Activated naive CD4-positive, alpha-beta T cell treated with anti-CD3 and anti-CD28 coated beads for 36 hours (primary cell): ENCODE measurements at regions of chr15 and their contacts with region 1.

Region 1: DNA sequence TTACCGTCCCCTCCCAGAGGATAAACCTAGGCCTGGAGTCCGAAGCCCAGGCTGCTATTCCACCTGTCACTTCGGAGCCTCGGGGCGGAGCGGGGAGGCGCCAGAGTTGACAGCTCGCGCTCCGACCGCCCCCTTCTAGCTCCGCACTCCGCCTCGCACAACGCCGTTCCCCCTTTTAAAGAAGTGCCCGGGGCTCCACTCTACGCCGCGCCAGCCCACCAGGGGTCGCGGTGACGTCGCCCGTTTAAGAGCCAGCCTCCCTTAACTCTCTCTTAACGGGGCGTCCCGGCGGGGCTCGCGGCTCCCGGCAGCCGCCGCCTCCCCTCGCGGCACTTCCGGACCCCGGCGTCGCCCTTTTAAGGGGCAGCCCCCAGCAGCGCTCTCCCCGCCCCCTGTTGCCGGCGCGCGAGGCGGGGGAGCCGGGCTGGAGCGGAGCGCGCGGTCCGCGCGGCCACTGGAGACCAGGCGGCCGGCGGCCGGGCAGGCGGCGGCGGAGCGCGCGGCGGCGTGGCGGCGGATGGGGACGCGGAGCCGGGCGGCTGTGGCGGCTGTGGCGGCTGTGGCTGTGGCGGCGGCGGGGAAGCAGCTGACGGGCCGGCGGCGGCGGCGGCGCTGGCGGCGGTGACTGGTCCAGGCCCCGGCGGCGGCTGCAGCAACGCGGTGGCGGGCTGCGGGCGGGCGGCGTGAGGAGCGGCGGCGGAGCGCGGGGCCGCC is at the start of gene INAFM2:
- DNase-seq: peak; percentile 77
- H3K4me3 Mint-ChIP-seq: peak within 1 kb of the TSS; percentile 73
- H3K27ac Mint-ChIP-seq: no peak within 1 kb of the TSS
- H3K4me1 Mint-ChIP-seq: peaks cover 22% of the 10 kb centered on the region
- H3K27me3 Mint-ChIP-seq: no peaks in the 10 kb centered on the region
- total RNA-seq, gene INAFM2: 4.9 to 6.5 TPM

Region 2: GRCh38 chr15:39934397-39935071 is 388.9 kb before region 1 on chr15:
- CTCF ChIA-PET with region 1: no interaction called
- intact Hi-C with region 1: loop called (anchors 5 kb)
- DNase-seq: peak; percentile 8
- H3K4me3 Mint-ChIP-seq: peak overlapping the region; percentile 89
- H3K27ac Mint-ChIP-seq: peak overlapping the region; percentile 52
- H3K4me1 Mint-ChIP-seq: peaks cover 27% of the 10 kb centered on the region
- H3K27me3 Mint-ChIP-seq: no peaks in the 10 kb centered on the region

Region 3: DNA sequence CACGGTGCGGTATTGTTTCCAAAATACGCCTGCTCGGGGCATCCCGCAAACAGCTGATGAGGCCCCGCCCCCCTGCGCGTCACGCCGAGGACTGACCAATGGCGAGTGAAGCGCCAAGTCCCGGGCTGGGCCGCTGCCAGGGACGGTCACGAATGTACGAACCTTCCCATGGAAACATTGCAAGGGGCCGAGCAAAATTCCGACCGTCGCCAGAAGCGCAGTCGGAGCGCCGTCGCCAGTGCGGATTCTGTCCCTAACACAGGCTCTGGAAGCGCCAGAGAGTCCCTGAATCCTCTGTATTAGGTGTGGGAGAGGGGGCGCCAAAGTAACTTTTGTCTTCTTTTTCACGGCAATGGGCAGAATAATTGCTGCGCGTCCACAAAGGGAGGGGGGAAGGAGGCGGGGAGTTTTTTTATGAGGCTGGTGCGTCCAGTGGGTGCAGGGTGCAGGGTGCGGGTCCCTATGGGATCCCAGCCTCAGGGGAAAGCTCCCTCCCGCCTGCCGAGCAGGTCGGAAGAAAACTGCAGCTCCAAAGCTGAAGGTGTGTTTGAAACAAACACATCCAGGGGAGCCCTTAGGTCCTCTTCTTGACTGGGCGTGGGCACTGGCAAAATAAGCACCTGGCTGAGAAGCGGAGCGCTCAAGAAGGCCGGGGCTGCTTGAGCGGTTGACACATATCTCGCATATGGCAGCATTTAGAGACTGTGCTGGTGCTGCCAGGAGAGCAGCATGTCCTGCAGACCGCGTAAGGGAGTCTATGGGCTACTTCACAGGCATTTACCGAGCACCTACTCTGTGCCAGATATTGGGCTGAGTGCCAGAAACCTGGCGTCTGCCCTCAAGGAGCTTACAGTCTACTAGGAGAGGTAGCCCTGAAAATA is 214.3 kb before region 1 on chr15 and contains the start of gene BMF:
- CTCF ChIA-PET with region 1: interaction called, 3 read pairs
- intact Hi-C with region 1: loop called (anchors 5 kb)
- DNase-seq: peak; percentile 98
- H3K4me3 Mint-ChIP-seq: peak within 1 kb of the TSS; percentile 84
- H3K27ac Mint-ChIP-seq: peak within 1 kb of the TSS; percentile 31
- H3K4me1 Mint-ChIP-seq: peaks cover 40% of the 10 kb centered on the region
- H3K27me3 Mint-ChIP-seq: no peaks in the 10 kb centered on the region
- total RNA-seq, gene BMF: 9.4 to 10.3 TPM

Region 4: DNA sequence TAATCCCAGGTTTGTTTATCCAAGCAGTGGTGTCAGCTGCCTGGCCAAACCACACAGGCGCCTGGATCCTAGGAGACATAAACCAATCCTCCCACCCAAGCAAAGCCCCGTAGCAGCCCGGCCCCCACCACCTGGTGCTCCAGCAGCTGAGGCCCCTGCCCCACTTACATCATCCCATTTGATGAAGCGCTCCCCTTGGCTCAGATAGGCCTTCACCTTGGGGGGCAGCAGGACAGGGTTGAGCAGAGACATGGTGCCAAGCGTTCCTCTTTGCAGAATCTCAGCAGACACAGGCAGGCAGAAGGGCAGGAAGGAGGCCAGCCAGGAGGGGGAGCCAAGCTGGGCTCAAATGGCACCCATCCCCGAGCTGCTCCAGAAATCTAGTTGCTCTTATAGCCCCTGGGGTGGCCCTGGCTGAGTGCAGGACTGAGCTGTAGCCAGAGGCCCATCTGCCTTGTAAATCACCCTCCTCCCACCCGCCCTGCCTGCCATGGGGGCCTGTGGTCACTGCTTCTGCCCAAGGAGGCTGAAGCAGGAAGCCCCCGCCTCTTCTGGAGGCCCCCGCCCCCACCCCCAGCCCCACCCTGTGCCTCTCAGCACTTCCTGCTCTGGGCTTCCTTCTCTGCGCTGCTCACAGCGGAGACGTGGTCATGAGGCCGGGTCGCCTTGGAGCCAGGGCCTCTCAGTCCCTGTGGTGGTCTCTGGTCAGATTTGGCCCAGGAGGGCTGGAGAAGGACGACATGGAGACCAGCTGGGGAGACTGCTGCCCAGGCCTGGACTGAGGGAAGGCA is 15.8 kb before region 1 on chr15 and contains the start of gene PLCB2:
- CTCF ChIA-PET with region 1: interaction called, 448 read pairs
- intact Hi-C with region 1: loop called (anchors 1 kb)
- DNase-seq: peak; percentile 77
- H3K4me3 Mint-ChIP-seq: peak within 1 kb of the TSS; percentile 97
- H3K27ac Mint-ChIP-seq: peak within 1 kb of the TSS; percentile 96
- H3K4me1 Mint-ChIP-seq: peaks cover 29% of the 10 kb centered on the region
- H3K27me3 Mint-ChIP-seq: no peaks in the 10 kb centered on the region
- total RNA-seq, gene PLCB2: 55.0 to 56.7 TPM

Region 5: GRCh38 chr15:40357723-40358470 is 34.5 kb after region 1 on chr15 and contains the start of gene DISP2:
- CTCF ChIA-PET with region 1: interaction called, 5 read pairs
- intact Hi-C with region 1: loop called (anchors 2 kb)
- DNase-seq: peak; percentile 90
- H3K4me3 Mint-ChIP-seq: peak within 1 kb of the TSS; percentile 72
- H3K27ac Mint-ChIP-seq: no peak within 1 kb of the TSS
- H3K4me1 Mint-ChIP-seq: peaks cover 2% of the 10 kb centered on the region
- H3K27me3 Mint-ChIP-seq: peaks cover 5% of the 10 kb centered on the region
- total RNA-seq, gene DISP2: 0.02 TPM in 1 of 2 experiments, not detected in the other

Region 6: GRCh38 chr15:40421246-40422157 is 98.1 kb after region 1 on chr15:
- CTCF ChIA-PET with region 1: interaction called, 6 read pairs
- intact Hi-C with region 1: loop called (anchors 1 kb)
- DNase-seq: peak; percentile 90
- H3K4me3 Mint-ChIP-seq: no peak overlapping the region
- H3K27ac Mint-ChIP-seq: no peak overlapping the region
- H3K4me1 Mint-ChIP-seq: no peaks in the 10 kb centered on the region
- H3K27me3 Mint-ChIP-seq: no peaks in the 10 kb centered on the region

Region 7: DNA sequence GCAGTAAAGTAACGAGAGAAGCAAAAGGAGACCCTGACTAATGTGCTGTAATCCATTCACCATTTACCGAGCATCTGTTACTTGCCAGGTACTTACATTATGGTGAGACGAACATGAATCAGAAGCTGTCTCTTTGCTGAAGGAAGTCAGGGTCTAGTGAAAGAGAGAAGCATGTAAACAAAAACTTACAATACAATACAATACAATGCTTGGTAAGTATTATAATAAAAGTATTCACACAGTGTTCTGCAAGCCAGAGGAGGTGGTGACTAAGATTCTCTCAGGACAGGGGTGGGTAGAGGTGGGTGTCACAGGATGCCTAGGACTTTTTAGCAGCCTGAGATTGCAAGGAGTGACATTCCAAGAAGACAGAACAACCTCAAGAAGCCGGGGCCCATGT is 1286.7 kb after region 1 on chr15:
- CTCF ChIA-PET with region 1: no interaction called
- intact Hi-C with region 1: no loop called
- DNase-seq: no peak
- H3K4me3 Mint-ChIP-seq: no peak overlapping the region
- H3K27ac Mint-ChIP-seq: no peak overlapping the region
- H3K4me1 Mint-ChIP-seq: no peaks in the 10 kb centered on the region
- H3K27me3 Mint-ChIP-seq: no peaks in the 10 kb centered on the region